Esophagus squamous epithelium (tissue), 5 donors: ENCODE measurements at regions of chr5 and their contacts with region 1.

Region 1: DNA sequence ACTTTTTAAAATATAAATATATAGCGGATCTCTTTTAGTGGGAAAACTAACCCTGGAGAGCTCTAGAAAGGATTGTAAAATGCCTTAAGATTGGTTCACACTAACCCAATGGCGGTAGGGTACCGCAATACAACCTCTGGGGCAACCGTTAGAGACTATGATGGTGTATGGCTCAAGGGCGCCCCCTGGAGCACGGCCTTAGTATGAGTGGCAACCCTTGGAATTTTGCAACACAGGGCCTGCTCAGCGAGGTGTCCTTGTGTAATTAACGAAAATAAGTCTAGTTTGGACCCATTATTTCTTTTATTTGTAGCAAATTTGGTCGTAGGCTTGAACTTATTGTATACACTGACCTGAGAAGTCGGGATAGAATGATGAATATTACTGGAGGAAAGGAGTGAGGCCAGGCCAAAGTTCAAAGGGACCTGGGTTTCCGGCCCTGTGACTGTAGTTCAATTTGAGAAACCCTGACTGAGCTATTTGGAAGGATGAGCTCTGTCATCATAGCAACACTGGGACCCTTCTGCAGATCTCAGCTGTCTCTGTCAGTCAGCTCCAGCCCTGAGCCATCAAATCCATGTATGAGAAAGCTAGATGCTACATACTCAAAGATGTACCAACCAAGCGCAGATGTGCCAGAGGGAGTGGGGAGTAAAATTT is 54.8 kb downstream of the CAMK4 start:
- DNase-seq: no peak
- H3K4me3 ChIP-seq: no peak overlapping the region
- H3K27ac ChIP-seq: no peak overlapping the region
- H3K4me1 ChIP-seq: no peaks in the 10 kb centered on the region
- H3K27me3 ChIP-seq: no peaks in the 10 kb centered on the region
- CTCF ChIP-seq: peak; percentile 46 to 88 (median 78)
- POLR2A ChIP-seq: no peak

Region 2: DNA sequence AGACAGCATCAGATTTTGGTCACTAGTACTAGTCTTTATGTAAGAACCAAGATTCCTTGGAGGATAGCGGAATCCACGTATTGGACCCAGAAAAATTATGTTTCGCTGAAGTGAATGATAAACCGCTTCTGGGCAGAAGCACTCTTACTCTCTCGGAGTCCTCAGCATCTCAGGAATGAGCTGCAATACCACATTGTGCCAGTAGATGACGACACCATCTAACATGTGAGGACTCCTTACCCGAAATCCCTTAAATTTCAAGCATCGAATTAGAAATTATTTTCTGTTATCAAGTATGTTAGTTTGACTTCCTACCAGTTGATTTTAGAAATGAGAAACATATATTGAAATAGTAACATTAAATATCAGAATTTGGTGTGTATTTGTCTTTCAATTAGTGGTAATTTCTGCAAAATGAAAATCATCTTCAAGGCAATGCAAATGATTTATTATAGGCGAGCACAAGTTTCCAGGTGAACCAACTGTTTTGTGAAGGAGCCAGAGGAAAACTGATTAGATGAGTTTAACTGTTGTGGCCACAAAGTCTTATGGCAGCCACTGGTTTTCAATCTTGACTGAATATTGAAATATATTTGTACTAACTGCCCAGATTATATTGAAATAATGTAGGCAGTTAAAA is 120.8 kb before region 1 on chr5:
- intact Hi-C with region 1: loop called (anchors 5 kb)
- DNase-seq: no peak
- H3K4me3 ChIP-seq: no peak overlapping the region
- H3K27ac ChIP-seq: no peak overlapping the region
- H3K4me1 ChIP-seq: no peaks in the 10 kb centered on the region
- H3K27me3 ChIP-seq: no peaks in the 10 kb centered on the region
- CTCF ChIP-seq: peak; percentile 90 to 99 (median 97)
- POLR2A ChIP-seq: no peak